Activated CD4-positive, alpha-beta T cell treated with anti-CD3 and anti-CD28 coated beads, Interleukin-2, amount 10 ng/mL, durations not matched to agents 24 days and 14 days (primary cell): ENCODE measurements at regions of chr13 and their contacts with region 1.

Region 1: DNA sequence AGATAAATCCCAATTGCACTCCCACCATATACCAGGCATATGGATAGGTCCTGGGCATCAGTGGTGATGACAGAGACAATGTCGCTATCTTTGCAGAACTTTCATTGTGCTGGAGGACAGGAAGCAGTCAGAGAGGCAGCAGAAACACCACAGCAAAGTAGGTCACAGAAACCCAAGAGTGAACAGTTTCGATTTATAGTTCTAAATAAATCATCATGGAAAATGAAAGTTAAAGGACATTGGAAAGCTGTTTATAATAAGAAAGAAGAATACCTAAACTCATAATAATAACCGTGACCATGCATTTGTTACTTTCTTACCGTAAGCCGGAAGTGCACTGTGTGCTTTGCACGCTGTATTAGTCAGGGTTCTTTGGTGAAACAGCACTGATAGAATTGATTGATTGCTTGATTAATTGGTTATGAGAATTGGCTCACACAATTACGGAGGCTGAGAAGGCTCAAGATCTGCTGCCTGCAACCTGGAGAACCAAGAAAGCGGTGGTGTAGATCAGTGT is 38.9 kb downstream of the ALOX5AP start:
- DNase-seq: peak; percentile 70
- H3K4me3 Mint-ChIP-seq: peak overlapping the region; percentile 45
- H3K27ac Mint-ChIP-seq: peak overlapping the region; percentile 47
- H3K4me1 Mint-ChIP-seq: peaks cover 23% of the 10 kb centered on the region
- H3K27me3 Mint-ChIP-seq: peaks cover 2% of the 10 kb centered on the region

Region 2: DNA sequence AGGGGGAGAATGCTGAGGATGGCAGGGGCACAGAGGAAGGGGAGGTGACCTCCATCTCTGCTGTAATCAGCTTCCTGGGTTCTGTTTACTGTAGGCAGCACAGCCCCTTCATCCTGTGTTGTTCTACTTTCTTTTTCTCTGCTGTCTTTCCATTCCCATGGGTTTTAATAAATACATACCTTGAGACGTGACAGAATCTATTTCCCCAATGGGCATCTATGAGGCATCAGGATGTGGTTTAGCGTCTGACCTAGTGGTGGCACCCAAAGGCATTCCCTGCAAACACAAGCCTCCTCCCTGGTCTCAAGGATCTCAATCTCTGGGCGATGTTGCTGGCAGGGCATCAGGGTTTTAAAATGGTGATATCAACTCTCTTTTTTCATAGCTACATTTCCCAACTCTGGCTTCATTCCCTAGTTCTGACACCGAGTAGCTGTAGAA is 21.9 kb after region 1 on chr13:
- intact Hi-C with region 1: loop called (anchors 2 kb)
- DNase-seq: peak; percentile 71
- H3K4me3 Mint-ChIP-seq: peak overlapping the region; percentile 28
- H3K27ac Mint-ChIP-seq: peak overlapping the region; percentile 46
- H3K4me1 Mint-ChIP-seq: peaks cover 31% of the 10 kb centered on the region
- H3K27me3 Mint-ChIP-seq: no peaks in the 10 kb centered on the region

Region 3: GRCh38 chr13:30915691-30916541 is 141.6 kb after region 1 on chr13:
- intact Hi-C with region 1: no loop called
- DNase-seq: no peak
- H3K4me3 Mint-ChIP-seq: no peak overlapping the region
- H3K27ac Mint-ChIP-seq: no peak overlapping the region
- H3K4me1 Mint-ChIP-seq: no peaks in the 10 kb centered on the region
- H3K27me3 Mint-ChIP-seq: peaks cover 37% of the 10 kb centered on the region